PC-9 (cell line): ENCODE measurements at regions of chr17 and their contacts with region 1.

Region 1: DNA sequence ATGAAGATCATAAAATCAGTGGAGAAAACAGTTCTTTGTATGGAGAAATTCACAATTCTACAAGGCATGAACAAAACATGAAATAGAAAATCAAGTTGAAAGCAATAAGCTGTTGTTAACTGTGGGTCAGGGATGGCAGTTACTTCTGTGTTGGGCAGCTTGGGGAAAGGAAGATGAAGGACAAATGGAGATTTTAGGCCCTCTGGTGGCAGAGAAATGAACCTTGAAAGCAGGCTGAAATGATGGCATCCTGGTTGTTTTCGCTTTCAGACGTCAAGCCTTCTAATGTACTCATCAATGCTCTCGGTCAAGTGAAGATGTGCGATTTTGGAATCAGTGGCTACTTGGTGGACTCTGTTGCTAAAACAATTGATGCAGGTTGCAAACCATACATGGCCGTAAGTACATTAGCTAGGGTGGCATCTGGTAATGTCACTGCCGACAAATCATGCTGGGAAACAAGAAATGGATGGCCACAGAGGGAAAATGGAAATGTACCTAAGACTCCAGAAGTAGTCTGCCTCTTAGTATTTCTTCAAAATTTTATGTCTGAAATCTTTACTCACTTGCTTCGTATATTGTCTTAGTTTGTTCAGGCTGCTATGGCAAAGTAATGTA is 108.9 kb downstream of the MAP2K6 start:
- DNase-seq: peak in 1 of 2 experiments; percentile 10
- H3K4me3 ChIP-seq: no peak overlapping the region
- H3K27ac ChIP-seq: no peak overlapping the region
- H3K4me1 ChIP-seq: no peaks in the 10 kb centered on the region
- H3K27me3 ChIP-seq: no peaks in the 10 kb centered on the region
- CTCF ChIP-seq: peak; percentile 71

Region 2: DNA sequence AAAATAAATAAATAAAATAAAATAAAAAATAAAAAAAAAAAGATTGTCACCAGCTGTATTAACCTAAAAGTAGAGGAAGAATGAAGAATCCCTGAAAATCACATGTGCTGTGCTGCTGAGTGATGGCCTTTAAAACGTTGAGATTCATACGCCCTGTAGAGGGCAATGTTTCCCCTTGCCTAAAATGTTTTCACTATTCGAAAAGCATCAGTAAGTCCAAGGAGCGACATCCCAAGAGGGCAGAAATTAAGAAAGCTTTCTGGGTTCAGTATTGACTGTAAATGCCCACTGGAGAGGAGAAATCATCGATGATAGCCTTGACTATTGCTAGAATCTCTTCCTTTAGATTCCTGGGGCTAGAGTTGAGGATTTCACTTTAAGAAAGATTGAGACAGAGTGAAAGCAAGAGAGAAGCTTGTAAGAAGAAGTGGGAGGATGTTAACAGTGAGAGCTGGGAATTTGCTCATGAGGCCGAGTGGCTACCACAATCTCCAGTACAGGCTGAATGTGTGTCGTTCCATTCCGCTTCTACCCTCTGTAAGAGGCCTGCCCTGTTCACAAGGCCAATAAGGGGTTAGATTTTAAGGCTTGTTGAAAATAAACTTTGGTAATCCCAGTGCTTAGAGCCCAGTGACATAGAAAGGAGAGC is 751.4 kb before region 1 on chr17:
- CTCF ChIA-PET with region 1: no interaction called
- POLR2A ChIA-PET with region 1: no interaction called
- intact Hi-C with region 1: loop called (anchors 10 kb)
- DNase-seq: peak in 1 of 2 experiments; percentile 12
- H3K4me3 ChIP-seq: peak overlapping the region; percentile 21; the same call in 1 of the 2 replicates
- H3K27ac ChIP-seq: no peak overlapping the region
- H3K4me1 ChIP-seq: no peaks in the 10 kb centered on the region
- H3K27me3 ChIP-seq: no peaks in the 10 kb centered on the region
- CTCF ChIP-seq: peak; percentile 72

Region 3: DNA sequence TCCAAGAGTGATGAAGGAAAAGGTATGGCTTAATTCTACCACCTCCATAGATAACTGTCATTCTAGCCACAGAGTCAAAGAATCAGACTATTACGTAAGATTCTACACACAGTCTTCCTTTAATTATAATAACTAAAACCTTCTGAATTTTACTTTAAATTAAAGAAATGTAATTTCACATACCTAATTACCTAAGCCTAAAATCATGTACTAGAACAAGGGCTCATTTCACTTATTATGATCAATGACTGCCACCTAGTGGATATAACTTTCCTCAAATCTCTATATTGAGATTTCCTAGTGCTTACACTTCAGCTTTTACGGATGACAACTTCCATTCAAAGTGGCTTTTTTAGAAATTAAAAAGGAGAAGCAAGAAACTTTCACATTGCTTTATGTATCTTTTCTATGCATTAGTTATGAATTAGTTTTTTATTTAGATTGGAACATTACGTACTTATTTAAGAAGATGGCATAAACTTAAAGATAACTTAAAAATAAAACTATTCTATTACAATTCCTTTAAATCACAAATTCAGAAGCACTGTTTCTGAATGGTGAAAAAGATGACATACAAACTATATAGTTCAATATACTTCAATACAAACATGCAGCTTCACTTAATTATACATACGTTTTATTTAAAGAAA is 276.5 kb before region 1 on chr17:
- CTCF ChIA-PET with region 1: no interaction called
- POLR2A ChIA-PET with region 1: no interaction called
- intact Hi-C with region 1: loop called (anchors 5 kb)
- DNase-seq: no peak
- H3K4me3 ChIP-seq: no peak overlapping the region
- H3K27ac ChIP-seq: no peak overlapping the region
- H3K4me1 ChIP-seq: peaks cover 11% of the 10 kb centered on the region; the same call in 1 of the 2 replicates
- H3K27me3 ChIP-seq: no peaks in the 10 kb centered on the region
- CTCF ChIP-seq: peak; percentile 85

Region 4: GRCh38 chr17:69335058-69335457 is 188.3 kb before region 1 on chr17:
- CTCF ChIA-PET with region 1: no interaction called
- POLR2A ChIA-PET with region 1: no interaction called
- intact Hi-C with region 1: loop called (anchors 1 kb)
- DNase-seq: no peak
- H3K4me3 ChIP-seq: no peak overlapping the region
- H3K27ac ChIP-seq: no peak overlapping the region
- H3K4me1 ChIP-seq: no peaks in the 10 kb centered on the region
- H3K27me3 ChIP-seq: no peaks in the 10 kb centered on the region
- CTCF ChIP-seq: 0 out of 2 replicates have a peak, but pooled peaks have one; percentile 37

Region 5: GRCh38 chr17:69501591-69502468 is 21.5 kb before region 1 on chr17:
- CTCF ChIA-PET with region 1: no interaction called
- POLR2A ChIA-PET with region 1: no interaction called
- intact Hi-C with region 1: no loop called
- DNase-seq: no peak
- H3K4me3 ChIP-seq: no peak overlapping the region
- H3K27ac ChIP-seq: no peak overlapping the region
- H3K4me1 ChIP-seq: no peaks in the 10 kb centered on the region
- H3K27me3 ChIP-seq: no peaks in the 10 kb centered on the region
- CTCF ChIP-seq: no peak

Region 6: DNA sequence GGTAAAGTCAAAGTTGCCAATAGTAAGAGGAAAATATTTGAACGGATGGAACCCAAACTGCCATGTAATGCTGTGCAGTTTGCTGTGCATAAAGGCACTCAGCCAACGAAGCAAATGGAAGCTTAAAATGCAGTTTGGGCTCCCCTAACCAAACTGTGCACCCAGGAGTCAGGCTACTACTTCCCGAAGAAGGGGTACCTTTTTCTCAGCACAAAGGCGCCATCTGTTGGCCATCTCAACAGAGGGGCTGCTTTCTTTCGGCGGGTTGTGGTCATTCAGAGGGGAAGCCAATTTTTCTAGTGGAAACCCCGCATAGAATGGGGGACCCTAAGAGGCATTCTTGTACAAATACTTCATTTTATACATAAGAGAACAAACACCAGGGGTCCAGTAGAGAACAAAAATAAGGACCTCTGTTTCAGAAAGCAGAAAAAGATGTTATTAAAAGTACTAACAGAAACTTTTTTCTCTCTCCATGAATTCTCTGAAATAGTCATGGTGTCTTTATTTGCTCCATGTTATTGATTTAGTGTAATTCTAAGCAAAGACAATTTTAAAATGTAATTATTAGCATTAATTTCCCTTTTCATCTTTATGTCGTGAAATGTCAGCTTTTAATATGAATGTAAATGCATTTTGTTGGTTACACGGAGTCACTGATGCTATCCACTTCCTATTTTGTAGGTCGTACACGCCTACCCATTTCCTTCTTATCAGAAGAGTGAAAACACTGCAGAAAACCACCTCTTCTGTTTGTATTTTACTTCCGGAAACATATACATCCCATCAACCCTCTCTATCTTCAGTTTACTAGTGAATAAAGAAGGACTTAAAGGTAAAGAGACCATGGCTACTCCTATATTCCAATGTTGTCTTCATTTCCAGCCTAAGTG is 1099.3 kb after region 1 on chr17:
- CTCF ChIA-PET with region 1: no interaction called
- POLR2A ChIA-PET with region 1: no interaction called
- intact Hi-C with region 1: loop called (anchors 2 kb)
- DNase-seq: peak in 1 of 2 experiments; percentile 39
- H3K4me3 ChIP-seq: no peak overlapping the region
- H3K27ac ChIP-seq: no peak overlapping the region
- H3K4me1 ChIP-seq: no peaks in the 10 kb centered on the region
- H3K27me3 ChIP-seq: no peaks in the 10 kb centered on the region
- CTCF ChIP-seq: peak; percentile 72